ENCODE measurements at regions of chr19 and their contacts with region 1.

Region 1: GRCh38 chr19:33406521-33407139 is 33.1 kb downstream of the CEBPG start:
- DNase-seq: peak; percentile 76 to 95
- ATAC-seq: peak; percentile 54 to 89
- H3K4me3 ChIP-seq: no peak overlapping the region
- H3K27ac ChIP-seq: no peak overlapping the region
- H3K4me1 ChIP-seq: peaks cover 8% of the 10 kb centered on the region; the same call in 1 of the 3 replicates
- CTCF ChIP-seq: peak; percentile 99
- EP300 ChIP-seq: no peak
- POLR2A ChIP-seq: no peak
- RAD21 ChIP-seq: peak; percentile 100

Region 2: DNA sequence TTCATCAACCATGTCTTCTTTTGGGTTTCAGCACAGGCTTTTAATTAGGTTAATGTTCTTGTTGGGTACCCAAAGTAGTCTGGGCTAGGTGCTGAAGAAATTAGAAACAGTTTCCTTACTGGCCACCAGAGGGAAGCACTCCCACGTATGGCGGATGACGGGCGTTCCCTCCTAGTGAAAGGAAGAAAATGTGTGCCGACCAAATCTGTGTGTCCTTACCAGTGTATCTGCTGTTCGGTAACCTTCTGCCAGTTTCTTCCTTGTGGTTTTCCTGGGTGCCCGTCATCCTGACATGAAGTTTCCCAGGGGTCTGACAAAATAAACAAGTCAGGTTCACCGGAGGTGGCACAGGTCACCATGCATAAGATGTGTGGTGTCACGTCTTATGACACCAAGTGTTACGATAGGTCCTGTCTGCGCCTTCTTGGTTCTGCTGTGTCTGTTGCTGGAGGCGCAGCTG is 280.7 kb before region 1 on chr19:
- CTCF ChIA-PET with region 1: interaction called, 20 read pairs
- POLR2A ChIA-PET with region 1: no interaction called
- DNase-seq: peak; percentile 85 to 97
- ATAC-seq: peak; percentile 95 to 96
- H3K4me3 ChIP-seq: no peak overlapping the region
- H3K27ac ChIP-seq: 0 out of 6 replicates have a peak overlapping the region, but pooled peaks of 1 of the 2 experiments have one; percentile 17
- H3K4me1 ChIP-seq: no peaks in the 10 kb centered on the region
- CTCF ChIP-seq: peak; percentile 98
- EP300 ChIP-seq: no peak
- POLR2A ChIP-seq: no peak
- RAD21 ChIP-seq: peak; percentile 85 to 86

Region 3: GRCh38 chr19:33193865-33194362 is 212.7 kb before region 1 on chr19 and contains the start of gene LRP3:
- CTCF ChIA-PET with region 1: interaction called, 27 read pairs
- POLR2A ChIA-PET with region 1: no interaction called
- DNase-seq: peak in 1 of 2 experiments; percentile 55
- ATAC-seq: peak; percentile 59 to 64
- H3K4me3 ChIP-seq: peak within 1 kb of the TSS; percentile 69
- H3K27ac ChIP-seq: peak within 1 kb of the TSS; percentile 71 to 91
- H3K4me1 ChIP-seq: peaks cover 10% of the 10 kb centered on the region; the same call in 2 of the 3 replicates
- CTCF ChIP-seq: no peak
- EP300 ChIP-seq: no peak
- POLR2A ChIP-seq: peak; percentile 36; the same call in 1 of the 2 replicates
- RAD21 ChIP-seq: no peak
- polyA plus RNA-seq, gene LRP3: 10.9 and 16.1 TPM in 2 replicates

Region 4: GRCh38 chr19:33248954-33249613 is 157.5 kb before region 1 on chr19:
- CTCF ChIA-PET with region 1: interaction called, 1,493 read pairs
- POLR2A ChIA-PET with region 1: interaction called, 3 read pairs
- DNase-seq: peak; percentile 63 to 90
- ATAC-seq: peak; percentile 72 to 79
- H3K4me3 ChIP-seq: 0 out of 3 replicates have a peak overlapping the region, but pooled peaks have one; percentile 18
- H3K27ac ChIP-seq: peak overlapping the region; percentile 36 to 75; a peak in 4 of 6 replicates
- H3K4me1 ChIP-seq: peaks cover 13% of the 10 kb centered on the region
- CTCF ChIP-seq: peak; percentile 48
- EP300 ChIP-seq: no peak
- POLR2A ChIP-seq: no peak
- RAD21 ChIP-seq: peak in 1 of 2 experiments; percentile 45; a peak in 3 of 5 replicates

Region 5: DNA sequence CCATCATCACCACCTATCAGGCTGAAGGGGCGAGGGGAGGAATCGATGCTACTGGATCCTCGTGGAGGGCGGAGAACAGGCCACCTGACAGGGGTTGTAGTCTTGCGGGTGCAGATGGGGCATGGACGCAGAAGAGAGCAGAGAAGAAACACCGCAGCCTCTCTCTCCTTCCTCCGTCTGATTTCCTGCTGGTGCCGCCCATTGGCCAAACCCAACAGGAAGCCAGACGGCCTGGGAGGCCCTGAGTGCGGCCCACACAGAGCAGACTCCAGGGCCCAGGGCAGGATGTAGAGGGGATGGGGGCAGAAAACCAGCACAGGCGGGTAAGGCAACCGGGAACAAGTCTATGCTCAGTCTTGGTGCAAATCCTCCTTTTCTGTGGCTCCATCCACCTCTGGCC is 119.7 kb before region 1 on chr19:
- CTCF ChIA-PET with region 1: interaction called, 28 read pairs
- POLR2A ChIA-PET with region 1: no interaction called
- DNase-seq: no peak
- ATAC-seq: no peak
- H3K4me3 ChIP-seq: no peak overlapping the region
- H3K27ac ChIP-seq: no peak overlapping the region
- H3K4me1 ChIP-seq: peaks cover 18% of the 10 kb centered on the region
- CTCF ChIP-seq: no peak
- EP300 ChIP-seq: no peak
- POLR2A ChIP-seq: no peak
- RAD21 ChIP-seq: no peak

Region 6: DNA sequence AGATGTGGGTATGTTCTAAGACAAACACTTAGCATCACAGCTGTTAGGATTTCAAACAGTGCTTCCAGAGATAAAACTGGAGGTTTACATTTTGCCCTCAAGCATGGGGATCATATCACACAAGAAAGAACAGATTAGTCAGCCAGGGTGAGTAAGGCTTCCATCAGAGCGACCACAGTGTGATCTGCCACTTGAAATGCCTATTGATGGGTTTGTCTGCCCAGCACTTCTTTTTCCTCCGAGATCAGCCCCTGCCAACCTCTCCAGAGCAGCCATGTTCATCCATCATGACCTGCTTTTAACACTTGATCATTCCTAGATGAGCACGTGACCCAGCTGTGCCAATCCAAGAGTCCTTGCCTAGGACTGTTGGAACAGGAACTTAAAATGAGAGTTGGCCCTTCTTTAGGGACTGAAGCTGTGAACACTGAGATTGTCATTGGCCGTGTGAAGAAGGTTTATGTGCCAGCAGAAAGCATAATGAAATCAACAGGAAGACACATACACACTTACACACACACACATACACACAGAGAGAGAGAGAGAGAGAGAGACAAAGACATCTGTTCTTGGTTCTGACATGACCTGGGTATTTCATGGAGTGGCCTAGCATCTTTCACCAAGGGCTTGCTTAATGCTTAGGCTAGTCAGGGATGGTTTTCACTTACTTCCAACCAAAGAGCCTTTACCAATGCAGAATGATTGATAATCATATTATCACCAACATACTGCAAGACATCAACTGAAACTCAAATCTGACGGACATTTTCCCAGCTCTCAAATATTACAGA is 38.4 kb before region 1 on chr19:
- CTCF ChIA-PET with region 1: interaction called, 22 read pairs
- POLR2A ChIA-PET with region 1: interaction called, 5 read pairs
- DNase-seq: peak in 1 of 2 experiments; percentile 49
- ATAC-seq: peak in 1 of 2 experiments; percentile 16; a peak in 2 of 6 replicates
- H3K4me3 ChIP-seq: no peak overlapping the region
- H3K27ac ChIP-seq: 0 out of 6 replicates have a peak overlapping the region, but pooled peaks of 1 of the 2 experiments have one; percentile 1
- H3K4me1 ChIP-seq: peaks cover 12% of the 10 kb centered on the region; the same call in 2 of the 3 replicates
- CTCF ChIP-seq: no peak
- EP300 ChIP-seq: no peak
- POLR2A ChIP-seq: no peak
- RAD21 ChIP-seq: no peak

Region 7: GRCh38 chr19:33447336-33448158 is 40.9 kb after region 1 on chr19:
- CTCF ChIA-PET with region 1: interaction called, 11 read pairs
- POLR2A ChIA-PET with region 1: no interaction called
- DNase-seq: no peak
- ATAC-seq: peak in 1 of 2 experiments; percentile 17; a peak in 1 of 6 replicates
- H3K4me3 ChIP-seq: no peak overlapping the region
- H3K27ac ChIP-seq: no peak overlapping the region
- H3K4me1 ChIP-seq: no peaks in the 10 kb centered on the region
- CTCF ChIP-seq: no peak
- EP300 ChIP-seq: no peak
- POLR2A ChIP-seq: no peak
- RAD21 ChIP-seq: no peak

Region 8: GRCh38 chr19:33639035-33639681 is 232.5 kb after region 1 on chr19:
- CTCF ChIA-PET with region 1: no interaction called
- POLR2A ChIA-PET with region 1: no interaction called
- DNase-seq: no peak
- ATAC-seq: peak in 1 of 2 experiments; percentile 9; a peak in 2 of 6 replicates
- H3K4me3 ChIP-seq: no peak overlapping the region
- H3K27ac ChIP-seq: no peak overlapping the region
- H3K4me1 ChIP-seq: no peaks in the 10 kb centered on the region
- CTCF ChIP-seq: no peak
- EP300 ChIP-seq: no peak
- POLR2A ChIP-seq: no peak
- RAD21 ChIP-seq: no peak